Sciatic nerve (tissue), 2 donors: ENCODE measurements at regions of chr3 and their contacts with region 1.

Region 1: DNA sequence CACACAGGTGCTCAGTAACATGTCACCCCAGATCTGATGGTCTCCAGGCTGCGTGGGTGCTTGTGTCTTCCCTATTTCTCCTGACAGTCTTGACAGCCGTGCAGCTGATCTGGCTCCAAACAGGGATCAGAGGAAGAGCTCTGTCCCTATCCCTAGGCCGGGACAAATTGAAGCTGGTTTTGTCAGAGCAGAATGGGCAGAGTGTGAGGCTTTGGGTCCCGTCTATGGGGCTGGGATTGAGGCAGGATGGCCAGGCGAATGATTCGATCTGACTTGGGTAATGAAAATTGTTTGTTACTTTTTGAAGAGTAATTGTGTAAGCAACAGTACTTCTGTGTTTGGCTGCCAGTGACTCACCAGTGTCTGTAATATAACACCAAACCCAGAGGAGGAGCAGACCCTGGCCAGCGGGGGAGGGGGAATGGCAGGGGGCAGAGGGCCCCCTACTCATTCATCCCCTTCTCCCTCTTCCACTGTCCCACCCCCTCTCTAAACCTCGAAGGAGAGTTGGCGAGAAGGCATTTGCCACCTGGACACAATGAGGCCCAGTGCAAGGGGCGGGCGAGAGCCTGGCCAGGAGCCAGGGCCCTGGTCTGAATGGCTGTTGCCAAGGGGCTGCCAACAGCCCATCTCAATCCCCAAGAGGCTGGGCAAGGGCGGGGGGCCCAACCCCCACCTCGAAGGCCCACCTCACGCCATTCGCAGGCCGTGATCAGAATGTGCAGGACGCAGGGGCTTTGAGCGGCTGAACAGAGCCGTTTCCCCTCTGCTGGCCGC is 4.9 kb upstream of the MAGEF1 start:
- DNase-seq: peak; percentile 66
- ATAC-seq: peak; percentile 73

Region 2: DNA sequence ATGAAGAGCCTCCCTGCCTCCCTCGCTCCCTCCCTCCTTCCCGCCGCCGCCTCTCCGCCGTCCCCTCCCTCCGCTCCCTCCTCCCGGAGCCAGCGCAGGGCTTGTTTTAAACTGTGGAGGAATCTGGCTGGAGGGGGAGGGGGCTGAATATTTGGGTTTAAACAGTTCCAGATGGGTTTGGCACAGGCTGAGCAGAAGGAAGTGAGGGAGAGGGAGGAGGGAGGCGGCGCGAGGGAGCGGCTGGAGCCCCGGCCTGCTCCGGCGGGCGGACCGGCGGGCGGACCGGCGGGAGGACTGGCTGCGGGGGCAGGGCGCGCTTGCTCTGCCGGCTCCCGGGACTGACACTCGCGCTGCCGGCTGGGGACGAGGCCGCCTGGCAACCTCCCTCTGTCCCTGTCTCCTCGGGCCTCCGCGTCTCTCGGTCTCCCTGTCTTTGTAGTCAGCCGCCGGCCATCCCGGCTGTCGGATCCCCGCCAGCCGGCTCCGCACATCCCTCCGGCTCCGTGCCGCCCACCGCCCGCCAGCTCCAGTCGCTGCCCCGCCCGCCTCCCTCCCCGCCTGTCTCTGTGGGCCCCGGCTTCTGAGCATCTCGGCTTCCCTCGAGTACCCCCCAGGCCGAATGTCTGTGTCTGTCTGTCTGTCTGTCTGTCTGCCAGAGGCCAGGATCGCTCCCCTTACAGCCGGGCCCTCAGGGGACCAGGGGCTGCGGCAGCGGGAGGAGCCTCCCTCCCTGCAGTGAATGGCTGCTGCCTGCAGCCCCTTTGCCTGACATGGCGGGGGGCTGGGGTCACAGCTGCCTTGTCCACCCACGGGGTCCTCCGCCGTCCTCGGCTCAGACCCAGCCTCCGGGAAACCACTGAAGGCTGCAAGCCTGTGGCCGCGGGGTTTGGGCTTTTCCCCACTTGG is 147.6 kb before region 1 on chr3:
- intact Hi-C with region 1: loop called (anchors 5 kb)
- DNase-seq: peak; percentile 92
- ATAC-seq: peak; percentile 90

Region 3: GRCh38 chr3:184740524-184741484 is 24.0 kb after region 1 on chr3:
- intact Hi-C with region 1: no loop called
- DNase-seq: peak; percentile 30
- ATAC-seq: no peak